ENCODE measurements at regions of chr11 and their contacts with region 1.

Region 1: DNA sequence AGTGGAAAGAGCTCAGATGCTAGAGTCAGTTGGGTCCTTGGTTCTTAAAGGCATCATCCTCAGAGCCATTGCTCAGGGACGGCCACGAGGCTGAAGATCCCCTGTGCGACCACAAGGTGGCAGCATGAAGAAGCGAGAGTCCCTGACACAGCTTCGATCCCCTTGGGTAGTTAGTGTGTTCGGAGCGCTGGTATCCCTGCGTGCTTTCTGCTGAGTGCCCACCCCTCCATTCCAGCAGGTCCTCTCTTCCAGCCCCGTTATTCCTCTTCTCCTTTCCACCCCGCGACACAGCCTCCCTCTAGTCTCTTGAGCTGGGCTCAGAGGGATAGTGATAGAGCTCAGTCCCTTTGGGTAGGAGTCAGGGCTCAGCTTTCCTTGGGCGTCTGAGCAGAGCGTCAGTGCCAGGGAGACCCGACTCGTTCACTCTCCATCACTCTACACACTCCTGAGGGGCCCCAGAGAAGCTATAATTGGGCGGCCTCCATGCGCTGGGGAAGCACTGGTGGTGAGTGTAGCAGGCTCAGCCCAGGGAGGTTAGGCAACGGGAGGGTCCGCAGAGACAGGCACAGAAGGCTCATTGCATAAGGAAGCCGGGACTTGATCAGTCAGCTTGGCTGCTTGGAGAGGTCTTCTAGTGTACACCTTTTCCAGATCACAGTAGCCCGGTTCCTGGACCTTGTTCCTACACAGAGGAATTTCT is at the start of gene OR51D1:
- DNase-seq: peak; percentile 47
- H3K4me3 ChIP-seq: peak within 1 kb of the TSS; percentile 54
- H3K27ac ChIP-seq: no peak within 1 kb of the TSS
- H3K27me3 ChIP-seq: no peaks in the 10 kb centered on the region
- CTCF ChIP-seq: peak; percentile 95
- polyA plus RNA-seq, gene OR51D1: not detected in 2 replicates

Region 2: GRCh38 chr11:4626207-4627099 is 10.7 kb before region 1 on chr11:
- CTCF ChIA-PET with region 1: interaction called, 97 read pairs
- POLR2A ChIA-PET with region 1: no interaction called
- DNase-seq: peak; percentile 61
- H3K4me3 ChIP-seq: no peak overlapping the region
- H3K27ac ChIP-seq: no peak overlapping the region
- H3K27me3 ChIP-seq: peaks cover 6% of the 10 kb centered on the region
- CTCF ChIP-seq: peak; percentile 75

Region 3: DNA sequence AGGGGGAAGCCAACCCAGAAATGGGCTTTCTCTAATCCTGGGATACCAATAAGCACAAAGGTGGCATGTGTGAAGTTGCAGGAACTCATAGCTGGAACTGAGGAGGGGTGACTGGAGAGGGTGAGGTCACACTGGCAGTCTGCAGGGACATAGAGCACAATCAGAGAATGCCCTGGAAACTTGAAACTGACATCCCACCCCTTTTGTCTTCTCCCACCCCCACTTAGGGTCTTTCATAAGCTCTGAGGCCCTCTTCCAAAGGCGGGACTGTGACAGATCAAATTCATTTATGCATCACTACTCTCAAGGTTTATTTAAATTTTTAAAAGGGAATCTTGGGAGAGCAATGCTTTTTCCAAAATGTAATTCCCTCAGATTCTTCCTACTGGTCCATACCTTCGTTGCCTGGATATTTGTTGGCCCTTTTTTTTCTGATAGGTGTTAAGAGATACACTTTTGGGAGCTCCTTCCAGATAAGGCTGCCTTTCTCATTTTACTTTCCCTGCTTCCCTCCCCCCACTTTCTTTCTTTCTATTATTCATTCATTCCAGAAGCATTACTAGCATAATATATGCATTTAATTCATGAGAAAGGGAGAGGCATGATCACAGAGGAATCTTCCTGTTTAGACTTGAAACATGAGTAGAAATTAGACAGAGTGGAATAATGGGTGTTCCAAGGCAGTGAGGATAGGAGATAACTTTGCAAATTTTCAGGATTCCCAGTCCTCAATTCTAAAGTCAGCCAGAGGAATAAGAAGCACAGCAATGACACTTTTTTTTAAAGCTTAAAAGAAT is 45.7 kb after region 1 on chr11:
- CTCF ChIA-PET with region 1: interaction called, 13 read pairs
- POLR2A ChIA-PET with region 1: no interaction called
- DNase-seq: peak; percentile 48
- H3K4me3 ChIP-seq: no peak overlapping the region
- H3K27ac ChIP-seq: peak overlapping the region; percentile 35
- H3K27me3 ChIP-seq: no peaks in the 10 kb centered on the region
- CTCF ChIP-seq: no peak

Region 4: GRCh38 chr11:4782488-4782887 is 145.4 kb after region 1 on chr11:
- CTCF ChIA-PET with region 1: interaction called, 13 read pairs
- POLR2A ChIA-PET with region 1: no interaction called
- DNase-seq: no peak
- H3K4me3 ChIP-seq: no peak overlapping the region
- H3K27ac ChIP-seq: no peak overlapping the region
- H3K27me3 ChIP-seq: peaks cover 3% of the 10 kb centered on the region
- CTCF ChIP-seq: no peak

Region 5: DNA sequence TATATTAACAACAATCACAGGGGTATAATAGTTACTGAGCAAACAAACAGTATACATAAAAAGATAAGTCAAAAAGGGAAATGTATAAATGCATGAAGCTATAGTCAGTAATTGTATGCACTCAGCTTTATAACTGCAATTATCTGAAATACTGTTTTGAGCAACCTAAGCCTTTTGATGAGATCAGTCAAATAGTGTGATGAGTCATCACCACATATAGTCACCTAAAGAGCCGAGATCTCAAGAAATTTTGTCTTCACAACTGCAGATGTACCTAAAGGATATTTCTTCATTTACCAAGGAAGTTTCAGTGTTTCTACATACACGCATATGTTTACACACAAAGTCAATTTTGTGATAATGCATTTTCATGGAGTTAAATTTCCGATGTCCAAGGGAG is 323.8 kb after region 1 on chr11:
- CTCF ChIA-PET with region 1: no interaction called
- POLR2A ChIA-PET with region 1: no interaction called
- DNase-seq: no peak
- H3K4me3 ChIP-seq: no peak overlapping the region
- H3K27ac ChIP-seq: no peak overlapping the region
- H3K27me3 ChIP-seq: no peaks in the 10 kb centered on the region
- CTCF ChIP-seq: no peak

Region 6: DNA sequence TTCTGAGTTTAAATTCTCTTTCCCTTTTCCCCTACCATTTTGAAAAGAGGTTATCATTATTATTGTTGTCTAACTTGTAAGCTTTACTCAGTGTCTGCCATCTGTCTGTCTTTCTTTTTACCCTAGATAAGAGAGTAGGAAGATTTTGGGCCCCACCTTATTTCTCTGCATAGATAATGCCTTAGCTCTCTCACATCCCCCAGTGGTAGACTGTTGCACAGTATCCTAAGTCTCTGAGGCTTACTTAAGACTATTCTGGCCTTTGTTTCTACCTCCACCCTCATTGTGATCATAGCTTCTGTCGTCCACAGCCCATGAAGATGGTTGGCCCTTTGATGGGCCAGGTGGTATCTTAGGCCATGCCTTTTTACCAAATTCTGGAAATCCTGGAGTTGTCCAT is 353.9 kb after region 1 on chr11:
- CTCF ChIA-PET with region 1: interaction called, 41 read pairs
- POLR2A ChIA-PET with region 1: no interaction called
- DNase-seq: no peak
- H3K4me3 ChIP-seq: no peak overlapping the region
- H3K27ac ChIP-seq: no peak overlapping the region
- H3K27me3 ChIP-seq: no peaks in the 10 kb centered on the region
- CTCF ChIP-seq: peak; percentile 62